CD8-positive, alpha-beta T cell (primary cell): ENCODE measurements at regions of chr4 and their contacts with region 1.

Region 1: GRCh38 chr4:152255437-152256011 is 280.4 kb downstream of the FBXW7 start:
- DNase-seq: peak; percentile 15 to 87 (median 69)
- ATAC-seq: peak; percentile 98
- H3K4me3 ChIP-seq: no peak overlapping the region
- H3K4me3 Mint-ChIP-seq: no peak overlapping the region
- H3K27ac ChIP-seq: peak overlapping the region in 1 of 2 experiments; percentile 40
- H3K27ac Mint-ChIP-seq: no peak overlapping the region
- H3K4me1 ChIP-seq: peaks cover 49% of the 10 kb centered on the region
- H3K4me1 Mint-ChIP-seq: peaks cover 23% of the 10 kb centered on the region
- H3K27me3 ChIP-seq: no peaks in the 10 kb centered on the region
- H3K27me3 Mint-ChIP-seq: no peaks in the 10 kb centered on the region
- CTCF ChIP-seq: no peak

Region 2: DNA sequence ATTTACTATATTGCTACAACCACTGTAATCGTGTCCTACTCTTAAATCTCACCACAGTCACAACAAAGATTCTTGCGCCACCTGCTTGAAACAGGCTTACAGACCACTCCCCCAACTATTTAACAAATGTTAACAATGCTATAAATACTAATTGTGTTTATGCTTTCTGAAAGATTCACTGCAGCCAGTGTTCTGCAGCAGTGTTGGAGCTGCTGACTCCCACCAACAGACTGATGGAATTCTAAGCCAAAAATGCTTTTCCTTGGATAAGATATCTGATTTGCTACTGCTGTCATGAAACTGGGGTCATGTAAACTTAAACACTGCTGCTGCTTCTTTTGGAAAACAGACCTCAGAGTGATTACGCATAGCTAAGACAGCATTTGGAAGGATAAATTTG is 1917.8 kb before region 1 on chr4:
- CTCF ChIA-PET with region 1: no interaction called
- POLR2A ChIA-PET with region 1: no interaction called
- intact Hi-C with region 1: no loop called
- DNase-seq: no peak
- ATAC-seq: no peak
- H3K4me3 ChIP-seq: no peak overlapping the region
- H3K4me3 Mint-ChIP-seq: no peak overlapping the region
- H3K27ac ChIP-seq: no peak overlapping the region
- H3K27ac Mint-ChIP-seq: no peak overlapping the region
- H3K4me1 ChIP-seq: no peaks in the 10 kb centered on the region
- H3K4me1 Mint-ChIP-seq: no peaks in the 10 kb centered on the region
- H3K27me3 ChIP-seq: no peaks in the 10 kb centered on the region
- H3K27me3 Mint-ChIP-seq: no peaks in the 10 kb centered on the region
- CTCF ChIP-seq: no peak

Region 3: GRCh38 chr4:152269448-152270191 is 14.1 kb after region 1 on chr4:
- CTCF ChIA-PET with region 1: interaction called, 3 read pairs
- POLR2A ChIA-PET with region 1: interaction called, 15 read pairs
- intact Hi-C with region 1: no loop called
- DNase-seq: no peak
- ATAC-seq: no peak
- H3K4me3 ChIP-seq: no peak overlapping the region
- H3K4me3 Mint-ChIP-seq: no peak overlapping the region
- H3K27ac ChIP-seq: no peak overlapping the region
- H3K27ac Mint-ChIP-seq: no peak overlapping the region
- H3K4me1 ChIP-seq: no peaks in the 10 kb centered on the region
- H3K4me1 Mint-ChIP-seq: peaks cover 3% of the 10 kb centered on the region
- H3K27me3 ChIP-seq: no peaks in the 10 kb centered on the region
- H3K27me3 Mint-ChIP-seq: no peaks in the 10 kb centered on the region
- CTCF ChIP-seq: no peak

Region 4: GRCh38 chr4:153834901-153835300 is 1579.4 kb after region 1 on chr4:
- CTCF ChIA-PET with region 1: no interaction called
- POLR2A ChIA-PET with region 1: no interaction called
- intact Hi-C with region 1: no loop called
- DNase-seq: no peak
- ATAC-seq: no peak
- H3K4me3 ChIP-seq: no peak overlapping the region
- H3K4me3 Mint-ChIP-seq: no peak overlapping the region
- H3K27ac ChIP-seq: no peak overlapping the region
- H3K27ac Mint-ChIP-seq: no peak overlapping the region
- H3K4me1 ChIP-seq: no peaks in the 10 kb centered on the region
- H3K4me1 Mint-ChIP-seq: no peaks in the 10 kb centered on the region
- H3K27me3 ChIP-seq: no peaks in the 10 kb centered on the region
- H3K27me3 Mint-ChIP-seq: peaks cover 8% of the 10 kb centered on the region
- CTCF ChIP-seq: no peak